Breast epithelium (tissue), 4 donors: ENCODE measurements at regions of chr2 and their contacts with region 1.

Region 1: DNA sequence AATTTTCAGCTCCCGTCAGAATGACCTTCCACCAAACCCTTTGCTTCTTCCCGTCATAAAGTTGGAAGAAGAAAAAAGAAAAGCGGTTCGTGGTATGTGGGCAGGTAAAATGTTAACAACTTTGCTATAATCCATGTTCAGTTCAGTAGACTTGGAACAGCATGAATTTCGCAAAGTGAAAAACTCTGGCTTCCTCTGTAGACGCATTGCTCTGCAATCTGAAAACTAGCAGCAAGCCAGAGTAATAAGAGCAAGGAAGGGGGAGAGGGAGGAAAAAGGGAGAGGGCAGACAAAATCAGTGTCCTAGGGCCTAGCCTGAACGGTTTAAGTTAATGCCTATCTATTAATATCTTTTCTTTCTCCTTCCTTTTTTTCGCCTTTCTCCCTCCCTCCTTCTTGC is 26.7 kb upstream of the CHRNA1 start:
- DNase-seq: no peak
- H3K4me3 ChIP-seq: no peak overlapping the region
- H3K27ac ChIP-seq: no peak overlapping the region
- H3K4me1 ChIP-seq: no peaks in the 10 kb centered on the region
- H3K27me3 ChIP-seq: no peaks in the 10 kb centered on the region
- CTCF ChIP-seq: no peak
- POLR2A ChIP-seq: no peak

Region 2: DNA sequence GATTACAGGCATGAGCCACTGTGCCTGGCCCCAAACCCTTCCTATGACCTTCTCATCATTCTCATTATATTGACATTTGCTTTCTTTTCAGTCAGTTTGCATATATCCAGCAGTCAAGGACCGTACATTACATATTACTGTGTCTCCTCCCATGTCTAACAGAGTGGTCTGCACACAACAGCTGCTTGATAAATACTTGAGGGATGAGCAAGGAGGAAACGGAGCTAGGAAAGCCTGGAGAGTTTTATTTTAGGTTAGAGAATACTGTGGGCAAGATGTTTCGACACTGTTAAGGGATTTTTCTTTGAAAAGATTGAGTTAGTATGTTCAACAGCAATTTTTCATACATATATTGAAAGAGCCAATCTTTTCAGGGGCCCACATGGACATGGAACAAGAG is 49.4 kb after region 1 on chr2:
- intact Hi-C with region 1: loop called (anchors 2 kb)
- DNase-seq: no peak
- H3K4me3 ChIP-seq: no peak overlapping the region
- H3K27ac ChIP-seq: no peak overlapping the region
- H3K4me1 ChIP-seq: no peaks in the 10 kb centered on the region
- H3K27me3 ChIP-seq: no peaks in the 10 kb centered on the region
- CTCF ChIP-seq: no peak
- POLR2A ChIP-seq: no peak